ENCODE measurements at regions of chr3 and their contacts with region 1.

Region 1: DNA sequence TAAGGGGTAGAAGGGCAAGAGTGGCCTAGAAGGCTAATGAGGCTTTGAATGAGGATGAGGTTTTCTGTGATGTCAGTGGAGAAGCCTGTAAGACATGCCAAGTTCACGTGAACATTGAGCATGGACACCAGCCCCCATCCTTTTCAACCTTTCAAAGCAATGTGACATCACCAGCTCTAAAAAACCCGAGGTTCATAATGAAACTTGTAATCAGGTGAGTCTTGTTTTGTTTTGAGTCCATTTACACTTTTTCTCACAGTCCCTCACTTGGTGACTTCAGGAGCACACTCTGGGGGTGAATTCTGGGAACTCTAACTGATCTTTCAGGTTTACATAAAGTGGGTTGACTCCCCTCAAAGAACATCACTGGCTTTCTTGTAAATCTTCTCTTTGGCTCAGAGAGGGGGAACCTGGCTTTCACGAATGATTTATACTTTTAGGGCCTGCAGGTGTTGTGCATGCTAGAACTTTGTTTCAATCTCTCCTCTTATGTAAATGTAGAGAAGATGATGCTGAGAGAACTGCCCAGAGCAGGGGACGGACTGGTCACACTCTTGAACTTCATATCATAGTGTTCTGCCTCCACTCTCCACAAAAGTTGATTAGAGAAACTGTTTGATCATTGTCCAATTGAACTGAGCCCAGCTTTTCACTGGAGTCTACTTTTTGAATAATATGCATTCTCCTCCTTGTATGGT is 224.7 kb upstream of the SATB1 start:
- DNase-seq: no peak
- H3K4me3 Mint-ChIP-seq: no peak overlapping the region
- H3K27ac Mint-ChIP-seq: no peak overlapping the region
- H3K4me1 Mint-ChIP-seq: peaks cover 6% of the 10 kb centered on the region
- H3K27me3 Mint-ChIP-seq: no peaks in the 10 kb centered on the region
- CTCF ChIP-seq: no peak

Region 2: GRCh38 chr3:18559331-18559842 is 90.4 kb before region 1 on chr3:
- CTCF ChIA-PET with region 1: no interaction called
- intact Hi-C with region 1: loop called (anchors 10 kb)
- DNase-seq: peak; percentile 46
- H3K4me3 Mint-ChIP-seq: peak overlapping the region; percentile 10
- H3K27ac Mint-ChIP-seq: peak overlapping the region; percentile 68
- H3K4me1 Mint-ChIP-seq: peaks cover 11% of the 10 kb centered on the region
- H3K27me3 Mint-ChIP-seq: no peaks in the 10 kb centered on the region
- CTCF ChIP-seq: peak; percentile 67

Measured in Calu3 (cell line).